ENCODE measurements at regions of chr4 and their contacts with region 1.

Region 1: GRCh38 chr4:98260579-98261290 is 449 bp upstream of the RAP1GDS1 start:
- DNase-seq: peak; percentile 89
- H3K4me3 Mint-ChIP-seq: peak overlapping the region; percentile 95
- H3K27ac Mint-ChIP-seq: peak overlapping the region; percentile 98
- H3K4me1 Mint-ChIP-seq: peaks cover 44% of the 10 kb centered on the region
- H3K27me3 Mint-ChIP-seq: no peaks in the 10 kb centered on the region

Region 2: GRCh38 chr4:97411356-97411755 is 849.4 kb before region 1 on chr4:
- intact Hi-C with region 1: no loop called
- DNase-seq: no peak
- H3K4me3 Mint-ChIP-seq: no peak overlapping the region
- H3K27ac Mint-ChIP-seq: no peak overlapping the region
- H3K4me1 Mint-ChIP-seq: no peaks in the 10 kb centered on the region
- H3K27me3 Mint-ChIP-seq: no peaks in the 10 kb centered on the region

Region 3: DNA sequence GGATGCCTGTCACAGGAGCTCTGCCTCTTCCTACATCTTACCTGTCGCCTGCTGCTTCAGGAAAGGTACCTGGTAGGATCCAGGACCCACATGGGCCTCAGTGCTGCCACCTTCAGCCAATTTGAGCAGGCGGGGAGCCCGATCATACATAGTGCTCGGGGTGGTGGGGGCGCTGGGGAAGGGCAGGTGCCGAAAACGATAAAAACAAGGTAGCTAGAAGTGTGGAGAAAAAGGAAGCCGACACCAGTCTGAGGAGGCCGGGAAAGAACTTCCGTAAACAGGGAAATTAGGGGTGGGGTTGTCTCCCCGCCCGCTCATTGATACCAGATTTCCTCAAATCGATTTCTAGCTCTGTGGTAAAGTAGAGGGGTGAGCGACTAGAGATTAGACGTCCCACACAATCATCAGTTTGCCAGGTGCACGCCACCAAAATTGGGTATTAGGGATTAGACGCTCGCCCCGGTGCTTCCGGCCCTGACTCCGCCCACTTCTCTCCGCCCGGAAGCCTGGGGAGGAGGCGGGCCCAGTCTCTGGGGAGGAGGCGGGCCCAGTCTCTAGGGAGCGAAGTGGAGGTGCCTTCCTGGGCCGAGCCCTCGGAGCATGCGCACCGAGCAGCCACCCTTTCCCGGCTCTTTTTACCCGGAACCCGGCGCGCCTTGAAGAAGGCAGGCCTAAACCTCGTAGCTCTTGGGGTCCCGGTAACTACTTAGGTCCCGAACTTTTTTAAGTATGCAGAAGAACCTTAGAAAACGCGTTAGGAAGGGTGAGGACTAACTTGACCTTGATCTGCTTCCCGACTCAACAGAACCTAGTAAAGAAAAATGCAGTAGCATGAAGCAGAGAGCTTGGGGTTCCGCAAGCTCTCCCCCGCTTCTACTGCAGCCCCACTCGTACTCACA is 117.5 kb before region 1 on chr4 and contains the start of gene STPG2:
- intact Hi-C with region 1: loop called (anchors 1 kb)
- DNase-seq: peak; percentile 88
- H3K4me3 Mint-ChIP-seq: peak within 1 kb of the TSS; percentile 83
- H3K27ac Mint-ChIP-seq: peak within 1 kb of the TSS; percentile 90
- H3K4me1 Mint-ChIP-seq: peaks cover 26% of the 10 kb centered on the region
- H3K27me3 Mint-ChIP-seq: peaks cover 13% of the 10 kb centered on the region
- total RNA-seq, gene STPG2: not detected in 2 replicates

Region 4: GRCh38 chr4:98222306-98222705 is 38.4 kb before region 1 on chr4:
- intact Hi-C with region 1: no loop called
- DNase-seq: no peak
- H3K4me3 Mint-ChIP-seq: no peak overlapping the region
- H3K27ac Mint-ChIP-seq: no peak overlapping the region
- H3K4me1 Mint-ChIP-seq: no peaks in the 10 kb centered on the region
- H3K27me3 Mint-ChIP-seq: peaks cover 10% of the 10 kb centered on the region

Region 5: GRCh38 chr4:98283219-98284189 is 22.8 kb after region 1 on chr4:
- intact Hi-C with region 1: loop called (anchors 2 kb)
- DNase-seq: no peak
- H3K4me3 Mint-ChIP-seq: peak overlapping the region; percentile 17
- H3K27ac Mint-ChIP-seq: peak overlapping the region; percentile 74
- H3K4me1 Mint-ChIP-seq: peaks cover 41% of the 10 kb centered on the region
- H3K27me3 Mint-ChIP-seq: no peaks in the 10 kb centered on the region

Region 6: DNA sequence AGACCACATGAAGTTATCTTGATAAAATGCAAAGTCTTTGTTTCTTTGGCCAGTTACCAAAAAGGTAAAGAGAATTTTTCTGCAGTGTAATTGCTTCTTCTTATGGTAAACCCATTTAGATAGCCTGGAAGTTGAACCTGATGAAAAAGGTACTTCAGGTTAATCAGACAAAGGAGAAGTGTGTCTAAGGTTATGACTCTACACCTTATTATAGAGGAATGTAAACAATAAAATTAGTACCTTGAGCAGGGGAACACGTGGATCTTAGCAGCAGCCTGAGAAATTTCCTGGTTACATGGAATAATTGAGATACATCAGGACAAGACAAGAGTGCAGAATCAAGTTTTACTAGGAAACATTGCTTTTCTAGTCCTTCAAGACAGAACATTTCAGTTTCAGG is 71.3 kb after region 1 on chr4:
- intact Hi-C with region 1: no loop called
- DNase-seq: no peak
- H3K4me3 Mint-ChIP-seq: no peak overlapping the region
- H3K27ac Mint-ChIP-seq: no peak overlapping the region
- H3K4me1 Mint-ChIP-seq: peaks cover 5% of the 10 kb centered on the region
- H3K27me3 Mint-ChIP-seq: no peaks in the 10 kb centered on the region

Region 7: DNA sequence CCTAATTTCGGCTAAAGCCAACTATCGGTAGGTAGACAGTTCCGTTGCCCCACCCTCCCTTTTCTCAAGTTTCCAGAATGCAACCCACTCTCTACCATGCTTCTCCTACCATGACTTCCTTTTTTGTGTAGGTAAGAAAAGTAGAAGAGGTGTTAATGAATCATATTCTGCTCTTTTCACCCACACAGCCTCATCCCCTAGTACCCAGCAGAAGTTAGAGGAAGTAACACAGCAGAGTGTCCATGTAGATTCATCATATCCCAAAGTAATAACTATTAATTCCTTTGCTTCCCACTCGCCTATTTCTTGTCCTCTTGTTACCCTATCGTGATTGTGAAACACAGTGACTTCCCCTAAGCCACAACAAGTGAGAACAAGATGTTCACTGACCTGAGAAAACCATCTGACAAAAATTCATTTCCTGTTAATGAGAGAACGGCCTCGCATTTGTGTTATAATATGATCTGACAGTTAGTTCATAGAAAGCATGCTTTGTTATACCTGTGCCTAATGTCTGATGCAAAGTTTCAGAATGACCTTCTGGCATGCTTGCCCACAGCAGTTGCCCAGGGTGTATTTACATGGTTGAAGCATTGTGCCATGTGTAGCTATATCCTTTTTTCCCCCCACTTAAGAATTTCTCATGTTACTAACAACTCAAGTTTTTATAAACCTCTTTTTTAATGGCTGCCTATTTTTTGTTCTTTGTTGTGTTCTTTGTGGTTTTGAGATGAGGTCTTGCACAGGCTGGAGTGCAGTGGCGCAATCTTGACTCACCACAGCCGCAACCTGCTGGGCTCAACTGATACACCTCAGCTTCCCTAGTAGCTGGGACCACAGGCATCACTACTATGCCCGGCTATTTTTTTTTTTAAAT is 186.0 kb after region 1 on chr4:
- intact Hi-C with region 1: loop called (anchors 2 kb)
- DNase-seq: peak; percentile 60
- H3K4me3 Mint-ChIP-seq: peak overlapping the region; percentile 63
- H3K27ac Mint-ChIP-seq: peak overlapping the region; percentile 92
- H3K4me1 Mint-ChIP-seq: peaks cover 42% of the 10 kb centered on the region
- H3K27me3 Mint-ChIP-seq: no peaks in the 10 kb centered on the region

Region 8: GRCh38 chr4:98601708-98602107 is 341.0 kb after region 1 on chr4:
- intact Hi-C with region 1: loop called (anchors 5 kb)
- DNase-seq: no peak
- H3K4me3 Mint-ChIP-seq: peak overlapping the region; percentile 60
- H3K27ac Mint-ChIP-seq: peak overlapping the region; percentile 93
- H3K4me1 Mint-ChIP-seq: peaks cover 51% of the 10 kb centered on the region
- H3K27me3 Mint-ChIP-seq: no peaks in the 10 kb centered on the region

Region 9: GRCh38 chr4:99054428-99054994 is 793.8 kb after region 1 on chr4:
- intact Hi-C with region 1: loop called (anchors 10 kb)
- DNase-seq: no peak
- H3K4me3 Mint-ChIP-seq: no peak overlapping the region
- H3K27ac Mint-ChIP-seq: peak overlapping the region; percentile 75
- H3K4me1 Mint-ChIP-seq: peaks cover 41% of the 10 kb centered on the region
- H3K27me3 Mint-ChIP-seq: no peaks in the 10 kb centered on the region

Measured in activated T-helper 2 cell treated with anti-CD3 and anti-CD28 coated beads, Interferon-gamma antibody, Interleukin-2, Interleukin-4, amounts not matched to agents 10 μg/mL and 5 μg/mL and 100 μg/mL, durations not matched to agents 14 hours and 24 hours and 36 hours (primary cell).